Posterior vena cava (tissue), 2 donors: ENCODE measurements at regions of chr17 and their contacts with region 1.

Region 1: GRCh38 chr17:78634154-78634553 is 57.0 kb upstream of the DNAH17 start:
- DNase-seq: no peak

Region 2: DNA sequence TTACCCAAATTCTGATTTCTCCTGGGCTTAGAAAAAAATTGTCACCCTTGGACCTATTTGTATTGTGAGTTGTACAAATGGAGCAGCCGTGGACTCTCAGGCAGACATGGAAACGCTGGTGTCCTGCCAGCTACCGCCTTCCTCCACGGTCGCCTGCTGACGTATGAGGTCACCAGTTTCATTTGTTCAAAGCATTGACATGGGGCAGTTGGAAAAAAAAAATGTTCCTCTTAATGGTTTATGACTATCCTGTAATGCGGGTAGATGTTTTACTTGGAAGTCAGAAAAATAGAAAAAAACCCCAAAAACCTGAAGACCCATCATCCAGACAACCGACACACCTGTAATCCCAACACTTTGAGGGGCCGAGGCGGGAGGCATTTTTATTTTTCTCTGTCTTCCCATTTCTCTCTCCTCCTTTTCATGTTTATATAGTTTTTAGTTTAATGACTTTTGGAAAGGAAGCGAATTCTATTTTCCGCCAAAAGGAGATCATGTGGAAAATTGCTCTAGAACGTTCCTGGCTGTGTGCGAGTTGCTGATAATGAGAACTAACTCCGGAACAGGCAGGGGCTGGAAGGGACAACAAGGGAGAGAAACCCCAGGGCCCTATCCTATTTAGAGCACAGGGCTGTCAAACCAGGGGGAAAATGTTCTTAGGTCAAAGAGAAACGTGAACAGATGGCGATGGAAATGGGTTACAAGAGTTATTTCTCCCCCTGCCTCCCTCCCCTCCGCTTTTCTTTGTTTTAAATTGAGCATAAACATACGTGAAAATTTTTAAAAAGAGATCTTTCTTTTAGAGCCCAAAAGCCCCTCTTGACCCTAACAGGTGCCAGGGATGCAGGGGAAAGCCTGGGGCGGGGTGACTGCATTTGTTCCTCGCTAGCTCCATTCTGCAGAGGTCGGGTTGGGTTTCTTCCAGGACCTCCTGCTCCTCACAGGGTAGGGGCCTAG is 70.7 kb before region 1 on chr17:
- intact Hi-C with region 1: loop called in 1 of 2 experiments (anchors 2 kb)
- DNase-seq: no peak

Region 3: GRCh38 chr17:78598013-78598471 is 36.1 kb before region 1 on chr17:
- intact Hi-C with region 1: no loop called
- DNase-seq: no peak

Region 4: DNA sequence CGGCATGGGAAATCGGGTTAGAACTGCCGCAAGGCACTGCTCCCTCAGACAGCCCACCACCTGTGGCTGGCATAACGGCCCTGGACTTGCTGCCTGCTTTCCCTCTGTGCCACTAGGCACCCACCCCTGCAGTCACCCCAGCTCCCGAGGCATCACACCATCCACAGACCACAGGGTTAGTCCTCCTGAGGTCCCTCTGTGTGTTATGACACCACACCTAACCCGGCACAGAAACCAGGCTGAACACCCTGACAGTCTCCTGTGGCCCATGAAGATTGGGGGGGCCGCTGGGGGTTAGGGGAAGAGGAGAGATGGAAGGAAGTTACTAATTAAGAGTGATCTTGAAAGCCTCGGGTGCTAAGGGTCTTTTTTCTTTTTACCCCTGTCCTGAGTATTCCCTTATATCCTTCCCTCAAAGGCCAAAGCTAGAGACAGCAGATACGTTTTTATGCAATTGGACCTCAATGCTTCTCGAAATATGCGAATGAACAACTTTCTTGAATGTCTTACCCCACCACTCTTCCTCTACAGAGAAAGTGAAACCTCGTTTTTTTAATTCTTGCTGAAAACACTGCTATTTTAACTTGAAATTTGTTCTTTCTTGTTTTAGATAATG is 140.9 kb after region 1 on chr17:
- intact Hi-C with region 1: no loop called
- DNase-seq: no peak